Dorsolateral prefrontal cortex (tissue), 120 donors: ENCODE measurements at regions of chr17 and their contacts with region 1.

Region 1: GRCh38 chr17:42200702-42201101 is 6.4 kb upstream of the GHDC start:
- DNase-seq: peak in 9 of 10 donors; percentile 47 to 80 (median 65)
- H3K4me3 ChIP-seq: peak overlapping the region in 5 of 59 donors; percentile 0 to 27 (median 13)
- H3K27ac ChIP-seq: peak overlapping the region in 51 of 59 donors; percentile 1 to 84 (median 60)
- H3K27me3 ChIP-seq: no peaks in the 10 kb centered on the region
- CTCF ChIP-seq: no peak

Region 2: GRCh38 chr17:42276359-42276608 is 75.6 kb after region 1 on chr17 and contains the start of gene STAT5B:
- intact Hi-C with region 1: loop called in 1 of 2 experiments (anchors 5 kb)
- DNase-seq: peak in 7 of 10 donors; percentile 31 to 84 (median 66)
- H3K4me3 ChIP-seq: peak within 1 kb of the TSS; percentile 69 to 96 (median 86)
- H3K27ac ChIP-seq: peak within 1 kb of the TSS in 58 of 59 donors; percentile 41 to 96 (median 85)
- H3K27me3 ChIP-seq: no peaks in the 10 kb centered on the region
- CTCF ChIP-seq: no peak
- total RNA-seq, gene STAT5B: 45.7 to 81.6 (median 60.4) TPM